Dorsolateral prefrontal cortex (tissue), 120 donors: ENCODE measurements at regions of chr13 and their contacts with region 1.

Region 1: DNA sequence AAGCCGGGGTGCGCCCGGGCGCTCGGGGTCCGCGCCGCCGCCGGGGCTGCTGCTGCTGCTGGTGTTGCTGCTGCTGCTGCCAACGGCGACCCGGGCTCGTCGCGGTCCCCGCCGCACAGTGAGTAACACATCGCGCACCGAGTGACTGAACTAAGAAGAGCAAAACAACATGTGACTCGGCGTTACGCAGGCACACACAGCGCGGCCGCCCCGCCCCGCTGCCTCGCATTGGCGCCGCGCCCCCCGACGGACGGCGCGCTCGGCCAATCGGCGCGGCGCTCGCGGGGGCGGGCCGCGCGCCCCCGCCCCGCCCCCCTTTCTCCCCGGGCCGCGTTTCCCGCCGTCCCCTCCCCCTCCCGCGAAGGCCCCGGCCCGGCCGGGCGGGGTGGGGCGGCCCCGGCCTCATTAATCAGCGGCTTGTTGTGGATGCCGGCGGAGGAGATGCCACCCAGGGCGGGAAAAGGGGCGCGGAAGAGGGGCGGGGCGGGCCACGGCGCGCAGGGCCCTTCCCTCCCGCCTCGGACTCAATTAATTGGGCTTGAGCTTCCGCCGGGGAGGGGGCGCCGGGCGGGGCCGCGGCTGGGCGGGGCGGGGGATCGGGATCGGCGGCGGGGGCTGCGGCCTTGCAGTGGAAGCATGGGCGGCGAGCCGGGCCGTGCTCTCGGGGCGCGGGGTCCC is at the start of gene IRS2:
- DNase-seq: peak; percentile 92 to 98 (median 98)
- H3K4me3 ChIP-seq: peak within 1 kb of the TSS; percentile 62 to 92 (median 82)
- H3K27ac ChIP-seq: peak within 1 kb of the TSS; percentile 79 to 97 (median 94)
- H3K27me3 ChIP-seq: no peaks in the 10 kb centered on the region
- CTCF ChIP-seq: peak in 1 of 56 donors; percentile 8
- total RNA-seq, gene IRS2: 46.0 to 107 (median 73.1) TPM

Region 2: DNA sequence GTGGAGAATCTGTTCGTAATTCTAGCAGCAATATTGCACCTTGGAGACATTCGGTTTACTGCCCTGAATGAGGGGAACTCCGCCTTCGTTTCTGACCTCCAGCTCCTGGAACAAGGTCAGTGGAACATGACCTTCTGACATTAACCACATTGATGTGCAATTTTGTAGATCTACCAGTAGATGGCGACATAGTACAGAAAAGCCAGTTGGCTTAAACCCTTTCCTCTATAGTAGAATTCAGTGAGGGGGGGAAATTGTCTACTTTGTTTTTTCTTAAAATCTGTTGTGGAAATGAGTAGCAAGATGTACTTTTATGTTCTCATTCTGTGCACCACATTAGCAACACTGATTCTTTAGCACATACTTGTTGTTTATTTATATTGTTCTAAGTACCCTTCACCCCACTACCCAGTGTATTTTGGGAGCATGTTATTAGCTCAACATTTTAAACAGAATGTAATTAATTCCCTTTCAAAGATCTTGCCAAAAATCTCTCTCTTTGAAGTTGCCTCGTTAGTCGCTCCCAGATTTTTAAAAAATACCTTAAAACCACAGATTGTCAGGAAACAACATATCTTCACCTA is 825.0 kb before region 1 on chr13:
- intact Hi-C with region 1: loop called (anchors 2 to 5 kb)
- DNase-seq: no peak
- H3K4me3 ChIP-seq: no peak overlapping the region
- H3K27ac ChIP-seq: no peak overlapping the region
- H3K27me3 ChIP-seq: no peaks in the 10 kb centered on the region
- CTCF ChIP-seq: peak; percentile 84 to 98 (median 92)

Region 3: GRCh38 chr13:109156181-109156935 is 630.2 kb before region 1 on chr13:
- intact Hi-C with region 1: loop called in 1 of 2 experiments (anchors 5 kb)
- DNase-seq: peak in 2 of 10 donors; percentile 66 to 70
- H3K4me3 ChIP-seq: peak overlapping the region in 16 of 59 donors; percentile 1 to 39 (median 16)
- H3K27ac ChIP-seq: peak overlapping the region in 52 of 59 donors; percentile 30 to 91 (median 72)
- H3K27me3 ChIP-seq: no peaks in the 10 kb centered on the region
- CTCF ChIP-seq: no peak

Region 4: DNA sequence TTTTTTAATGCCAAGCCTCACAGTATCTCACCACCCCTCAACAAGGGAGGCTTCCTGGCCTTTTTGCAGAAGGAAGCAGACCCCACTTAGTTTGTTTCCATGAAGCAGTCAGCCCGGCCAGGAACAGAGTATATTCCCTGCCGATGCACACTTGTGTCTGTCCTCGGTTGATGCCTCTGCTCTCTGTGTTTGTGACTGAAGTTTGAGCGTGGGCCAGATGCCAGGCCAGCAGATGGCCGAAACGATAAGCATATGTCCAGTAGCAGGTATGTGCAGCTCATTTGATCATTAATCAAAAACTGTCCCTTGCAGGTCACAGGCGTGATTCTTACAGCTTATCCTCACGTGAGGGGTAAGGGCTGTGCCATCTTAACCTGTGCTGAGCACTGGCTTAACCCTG is 144.2 kb before region 1 on chr13:
- intact Hi-C with region 1: no loop called
- DNase-seq: peak in 1 of 10 donors; percentile 73
- H3K4me3 ChIP-seq: no peak overlapping the region
- H3K27ac ChIP-seq: no peak overlapping the region
- H3K27me3 ChIP-seq: peaks cover 0 to 3% (median 0%) of the 10 kb centered on the region in 45 donors
- CTCF ChIP-seq: no peak

Region 5: GRCh38 chr13:110108347-110109174 is 322.0 kb after region 1 on chr13:
- intact Hi-C with region 1: loop called (anchors 5 kb)
- DNase-seq: peak; percentile 28 to 87 (median 82)
- H3K4me3 ChIP-seq: no peak overlapping the region
- H3K27ac ChIP-seq: peak overlapping the region in 15 of 59 donors; percentile 14 to 76 (median 50)
- H3K27me3 ChIP-seq: no peaks in the 10 kb centered on the region
- CTCF ChIP-seq: peak; percentile 16 to 82 (median 68)

Region 6: DNA sequence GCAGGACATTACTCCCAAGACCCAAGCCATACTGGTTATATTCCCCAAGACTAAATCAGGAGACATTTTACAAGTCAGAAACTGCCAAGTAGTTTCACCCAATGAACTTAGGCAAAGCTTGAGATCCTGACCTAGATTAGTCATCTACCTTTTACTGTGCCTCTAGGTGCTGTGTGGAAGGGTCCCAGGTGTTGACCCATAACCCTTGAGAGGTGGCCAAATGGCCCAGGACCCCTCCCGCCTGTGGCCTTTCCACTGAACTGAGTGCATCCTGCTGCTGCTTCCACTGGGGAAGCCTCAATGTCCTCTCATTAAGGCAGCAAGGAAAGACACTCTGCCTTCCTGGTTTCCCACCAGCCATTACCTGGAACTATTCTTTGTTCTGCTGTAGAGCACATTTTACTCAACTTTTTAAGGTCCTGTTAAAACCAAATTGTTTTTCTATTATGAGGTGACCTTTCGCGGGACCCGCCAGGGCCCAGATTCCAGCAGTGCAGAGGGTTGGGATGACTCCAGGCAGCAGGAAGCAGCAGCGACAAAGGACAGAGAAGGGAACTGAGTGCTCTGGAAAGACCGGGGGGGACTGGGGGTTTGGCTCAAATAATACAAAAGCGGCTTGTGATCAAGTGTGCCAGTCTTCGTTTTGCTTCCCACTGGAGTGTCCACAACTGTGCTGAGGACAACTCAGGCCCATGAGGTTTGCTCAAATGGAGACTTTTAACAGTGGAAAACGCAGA is 1101.2 kb after region 1 on chr13:
- intact Hi-C with region 1: no loop called
- DNase-seq: peak in 5 of 10 donors; percentile 28 to 72 (median 65)
- H3K4me3 ChIP-seq: peak overlapping the region in 6 of 59 donors; percentile 2 to 28 (median 17)
- H3K27ac ChIP-seq: peak overlapping the region in 36 of 59 donors; percentile 0 to 73 (median 46)
- H3K27me3 ChIP-seq: no peaks in the 10 kb centered on the region
- CTCF ChIP-seq: peak in 7 of 56 donors; percentile 8 to 27 (median 13)